BJ (cell line): ENCODE measurements at regions of chr9 and their contacts with region 1.

Region 1: DNA sequence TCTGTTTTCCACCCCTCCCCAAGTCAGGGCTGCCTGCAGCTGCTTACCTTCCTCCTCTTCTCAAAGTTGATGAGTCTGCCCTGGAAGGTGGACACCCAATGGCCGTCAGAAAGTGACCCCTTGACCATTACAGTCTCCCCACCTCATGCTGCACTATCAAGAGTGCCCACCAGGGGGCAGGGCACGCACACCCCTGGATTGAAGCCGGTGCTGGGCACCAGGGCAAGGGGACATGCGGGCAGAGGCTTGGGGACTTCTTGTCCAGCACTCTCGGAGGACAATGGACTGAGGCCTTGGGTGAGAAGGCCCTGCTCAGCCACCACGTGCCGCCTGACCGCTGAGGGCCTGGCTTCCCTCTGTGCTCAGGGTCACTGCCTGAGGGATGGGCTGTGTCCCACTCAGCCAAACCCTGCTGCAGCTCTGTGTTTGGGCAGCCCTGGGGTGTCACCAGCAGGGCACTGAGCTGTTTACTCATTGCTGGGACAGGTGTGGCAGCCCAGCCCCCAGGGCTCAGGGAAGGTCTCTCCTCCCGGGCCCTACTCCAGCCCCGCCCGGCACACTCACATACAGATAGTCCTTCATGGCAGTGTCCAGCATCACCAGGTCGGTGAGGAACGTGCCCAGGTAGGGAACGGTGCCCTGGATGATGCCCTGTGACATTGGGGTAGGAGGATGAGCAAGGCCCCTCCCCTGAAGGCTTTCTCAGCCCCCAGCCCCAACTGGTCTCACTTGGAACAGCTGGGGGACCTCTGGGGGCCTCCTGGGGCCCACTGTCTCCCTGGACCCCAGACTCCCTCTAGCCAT is 17.7 kb downstream of the RALGDS start:
- DNase-seq: no peak
- H3K4me3 ChIP-seq: no peak overlapping the region
- H3K27me3 ChIP-seq: no peaks in the 10 kb centered on the region
- CTCF ChIP-seq: peak; percentile 95

Region 2: DNA sequence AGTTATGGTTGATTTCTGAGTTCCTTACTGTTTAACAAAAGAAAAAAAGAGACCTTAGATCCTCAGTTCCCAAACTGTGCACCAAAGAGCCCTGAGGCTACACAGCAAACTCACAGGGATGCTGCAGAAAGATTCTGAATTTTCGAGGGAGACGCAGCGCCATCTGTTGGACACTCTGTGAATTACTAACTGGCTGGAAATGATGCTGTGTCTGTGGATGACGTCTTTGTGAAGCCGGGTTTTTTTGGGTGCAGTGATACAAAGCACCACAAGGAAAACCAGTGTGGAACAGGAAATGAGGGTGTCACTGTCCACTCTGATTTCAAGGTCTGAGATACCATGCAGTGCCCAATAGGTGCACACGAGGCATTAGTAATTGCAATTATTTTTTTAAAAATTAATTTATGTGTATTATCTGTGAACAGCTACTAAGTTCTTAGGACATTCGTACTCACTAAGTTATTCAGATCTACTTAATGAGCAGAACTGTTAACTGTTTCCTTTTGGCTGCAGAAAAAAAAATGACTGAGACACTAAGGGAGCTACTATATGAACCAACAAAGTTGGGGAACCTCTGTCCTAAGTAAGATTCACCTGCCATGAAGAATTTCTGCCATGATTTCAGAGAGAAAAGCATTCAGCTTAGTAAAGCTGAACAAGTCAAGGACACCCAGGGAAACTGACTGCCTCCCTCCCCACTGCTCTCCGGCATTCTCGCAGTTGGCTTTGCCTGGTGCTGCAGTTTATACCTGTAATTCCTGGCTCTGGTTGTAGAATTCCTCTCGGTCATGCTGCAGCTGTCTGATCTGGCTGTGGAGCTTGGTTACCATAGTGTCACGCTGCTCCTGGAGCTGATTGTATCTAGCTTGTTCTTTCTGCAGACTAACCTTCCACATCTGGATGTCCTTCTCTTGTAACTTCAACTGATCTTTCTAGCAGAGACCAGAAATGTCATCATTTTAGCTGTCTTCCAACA is 201.2 kb before region 1 on chr9:
- CTCF ChIA-PET with region 1: no interaction called
- POLR2A ChIA-PET with region 1: no interaction called
- DNase-seq: peak; percentile 40
- H3K4me3 ChIP-seq: no peak overlapping the region
- H3K27me3 ChIP-seq: no peaks in the 10 kb centered on the region
- CTCF ChIP-seq: peak; percentile 91

Region 3: GRCh38 chr9:133075925-133076630 is 27.3 kb before region 1 on chr9:
- CTCF ChIA-PET with region 1: interaction called, 45 read pairs
- POLR2A ChIA-PET with region 1: no interaction called
- DNase-seq: peak; percentile 67
- H3K4me3 ChIP-seq: no peak overlapping the region
- H3K27me3 ChIP-seq: 0 out of 2 replicates have a peak, but pooled peaks cover 7% of the 10 kb centered on the region
- CTCF ChIP-seq: no peak

Region 4: GRCh38 chr9:133115448-133116345 is 12.3 kb after region 1 on chr9:
- CTCF ChIA-PET with region 1: interaction called, 74 read pairs
- POLR2A ChIA-PET with region 1: no interaction called
- DNase-seq: no peak
- H3K4me3 ChIP-seq: no peak overlapping the region
- H3K27me3 ChIP-seq: no peaks in the 10 kb centered on the region
- CTCF ChIP-seq: no peak

Region 5: DNA sequence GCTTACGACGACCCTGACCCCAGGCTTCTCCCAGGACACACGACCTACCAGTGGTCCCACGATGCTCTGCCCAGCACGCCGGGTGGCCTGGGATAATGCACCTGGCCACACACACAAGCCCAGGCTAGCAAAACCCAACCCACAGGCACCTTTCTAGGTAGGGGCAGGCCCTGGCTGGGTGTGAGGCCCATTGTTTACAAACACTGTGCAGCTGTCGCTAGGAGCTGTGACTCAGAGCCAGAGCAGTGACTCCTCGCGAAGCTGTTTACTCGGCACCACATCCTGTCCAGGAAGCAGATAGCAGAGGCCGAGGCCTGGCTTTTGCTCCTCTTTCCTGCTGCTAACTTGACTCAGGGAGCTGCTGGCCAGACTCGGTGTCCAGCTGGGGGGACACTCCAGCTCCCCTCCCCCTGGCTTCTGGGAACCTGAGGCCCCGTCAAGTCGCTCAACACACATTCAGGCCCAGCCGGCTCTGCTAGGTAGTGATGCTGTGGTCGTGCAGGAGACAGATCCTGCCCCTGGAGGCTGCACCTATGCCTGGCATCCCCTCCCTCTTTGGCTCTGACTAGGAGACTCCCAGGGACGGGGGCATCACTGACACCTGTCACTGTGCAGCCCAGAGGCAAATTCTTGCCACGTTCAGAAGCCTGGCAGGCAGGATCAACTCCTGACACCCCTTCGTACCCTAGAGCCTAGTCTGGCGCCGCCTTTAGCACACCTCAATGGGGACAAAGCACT is 30.5 kb after region 1 on chr9:
- CTCF ChIA-PET with region 1: interaction called, 24 read pairs
- POLR2A ChIA-PET with region 1: no interaction called
- DNase-seq: peak; percentile 90
- H3K4me3 ChIP-seq: no peak overlapping the region
- H3K27me3 ChIP-seq: no peaks in the 10 kb centered on the region
- CTCF ChIP-seq: no peak